HEK293 (cell line): ENCODE measurements at regions of chr2 and their contacts with region 1.

Region 1: GRCh38 chr2:46469116-46469515 is 10.2 kb upstream of the TMEM247 start:
- H3K4me3 ChIP-seq: no peak overlapping the region
- H3K27ac ChIP-seq: no peak overlapping the region
- H3K4me1 ChIP-seq: no peaks in the 10 kb centered on the region
- CTCF ChIP-seq: no peak

Region 2: DNA sequence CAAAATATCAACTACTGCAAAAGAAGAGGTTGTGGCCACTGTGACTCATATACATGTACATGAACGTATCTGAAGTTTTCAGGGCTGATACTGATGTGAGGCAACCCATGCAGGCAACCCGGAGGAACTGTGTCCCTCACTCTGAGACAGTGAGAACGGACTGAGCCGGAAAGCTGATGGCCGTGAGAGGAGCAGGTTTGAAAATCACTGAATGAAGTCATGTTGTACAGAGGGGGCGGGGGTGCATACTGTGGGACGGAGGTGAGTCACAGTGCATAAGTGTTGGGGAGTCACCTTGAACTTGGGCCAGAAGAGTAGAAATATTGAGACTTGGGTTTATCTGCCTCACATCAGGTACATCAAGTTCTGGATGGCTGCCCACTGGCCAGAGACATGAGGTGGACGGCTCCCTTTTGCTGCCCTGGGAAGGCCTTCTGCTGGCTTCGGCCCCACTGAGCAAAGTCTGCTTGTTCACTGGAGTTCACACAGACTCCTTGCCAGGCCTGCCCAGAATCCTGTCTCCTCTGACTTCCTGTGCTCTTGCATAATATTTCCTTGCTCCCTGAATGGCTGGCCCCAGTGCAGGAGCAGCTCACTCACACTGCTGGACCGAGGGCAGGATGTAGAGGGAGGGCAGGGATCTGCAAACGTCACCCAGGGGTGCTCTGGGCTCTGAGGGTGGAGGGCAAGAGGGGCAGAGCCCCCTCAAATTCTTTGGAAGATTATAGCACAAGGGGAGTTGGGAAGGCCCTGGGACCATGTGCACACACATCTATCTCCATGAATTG is 153.8 kb before region 1 on chr2:
- CTCF ChIA-PET with region 1: no interaction called
- POLR2A ChIA-PET with region 1: no interaction called
- H3K4me3 ChIP-seq: no peak overlapping the region
- H3K27ac ChIP-seq: no peak overlapping the region
- H3K4me1 ChIP-seq: no peaks in the 10 kb centered on the region; the same call in 1 of the 2 replicates
- CTCF ChIP-seq: no peak

Region 3: GRCh38 chr2:46498681-46499080 is 29.6 kb after region 1 on chr2:
- CTCF ChIA-PET with region 1: interaction called, 10 read pairs
- POLR2A ChIA-PET with region 1: no interaction called
- H3K4me3 ChIP-seq: no peak overlapping the region
- H3K27ac ChIP-seq: no peak overlapping the region
- H3K4me1 ChIP-seq: no peaks in the 10 kb centered on the region
- CTCF ChIP-seq: no peak

Region 4: GRCh38 chr2:46555011-46555410 is 85.9 kb after region 1 on chr2:
- CTCF ChIA-PET with region 1: no interaction called
- POLR2A ChIA-PET with region 1: no interaction called
- H3K4me3 ChIP-seq: no peak overlapping the region
- H3K27ac ChIP-seq: no peak overlapping the region
- H3K4me1 ChIP-seq: no peaks in the 10 kb centered on the region
- CTCF ChIP-seq: no peak